ENCODE measurements at regions of chr3 and their contacts with region 1.

Region 1: DNA sequence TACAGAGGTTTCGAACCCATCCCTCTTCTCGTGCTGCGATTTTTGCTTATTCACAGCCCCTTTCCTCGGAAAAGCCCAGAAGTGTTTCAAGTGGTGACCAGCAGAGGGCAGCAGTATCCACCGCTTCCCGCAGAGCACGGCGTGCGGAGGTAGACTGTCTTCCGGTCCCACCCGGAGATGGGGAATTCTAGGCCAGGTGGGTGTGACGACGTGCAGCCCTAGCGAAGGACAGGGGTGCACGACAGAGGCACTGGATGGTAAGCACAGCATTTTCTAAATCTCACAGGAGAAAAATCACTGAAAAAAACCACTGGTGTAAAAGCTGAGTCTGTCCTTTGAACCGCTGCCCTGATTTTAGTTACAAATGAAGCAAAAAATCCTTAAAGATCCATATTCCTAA is 7.4 kb upstream of the PSMD6 start:
- DNase-seq: no peak
- H3K4me3 ChIP-seq: no peak overlapping the region
- CTCF ChIP-seq: peak; percentile 83

Region 2: DNA sequence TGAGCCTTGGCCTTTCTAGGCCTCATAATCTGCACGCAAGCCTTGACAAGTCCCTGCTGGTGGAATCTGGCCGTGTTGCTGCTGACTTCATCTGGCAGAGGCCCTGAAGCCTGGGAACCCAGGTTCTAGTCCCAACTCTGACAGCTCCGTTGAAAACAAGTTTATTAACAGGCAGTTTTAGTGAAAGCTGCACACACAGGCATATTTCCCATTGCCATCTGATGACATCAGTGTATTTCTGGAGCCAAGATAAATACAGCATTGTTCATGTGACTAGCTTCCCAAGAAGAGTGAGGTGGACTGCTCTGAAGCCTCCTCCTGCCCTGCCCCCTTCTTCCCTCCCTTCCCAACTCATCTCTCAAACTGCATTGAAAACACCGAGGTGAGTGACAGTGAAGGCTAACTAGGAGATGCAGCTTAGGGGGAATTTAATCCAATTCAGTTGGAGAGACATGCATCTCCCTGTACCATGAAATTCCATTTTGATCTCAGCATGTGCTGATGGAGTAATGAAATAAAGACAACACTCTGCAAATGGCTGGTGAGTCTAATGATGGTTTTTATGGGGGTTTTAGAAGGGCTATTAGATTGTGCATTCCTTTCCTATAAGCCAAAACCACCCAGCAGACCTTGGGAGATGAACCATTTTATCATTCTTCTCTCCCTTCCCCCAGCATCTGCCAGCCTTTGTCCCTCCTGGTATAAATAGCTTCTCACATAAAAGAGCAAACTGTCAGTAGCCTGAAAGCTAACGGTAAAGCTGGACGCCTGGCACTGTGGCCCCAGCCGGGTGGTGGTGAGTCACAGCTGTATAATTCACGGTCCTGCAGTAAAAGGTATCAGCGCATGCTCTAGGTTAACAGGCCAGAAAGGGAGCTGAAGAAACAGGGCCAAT is 156.6 kb after region 1 on chr3:
- in situ Hi-C with region 1: loop called (anchors 10 kb)
- DNase-seq: peak; percentile 95
- H3K4me3 ChIP-seq: no peak overlapping the region
- CTCF ChIP-seq: peak; percentile 2

Region 3: DNA sequence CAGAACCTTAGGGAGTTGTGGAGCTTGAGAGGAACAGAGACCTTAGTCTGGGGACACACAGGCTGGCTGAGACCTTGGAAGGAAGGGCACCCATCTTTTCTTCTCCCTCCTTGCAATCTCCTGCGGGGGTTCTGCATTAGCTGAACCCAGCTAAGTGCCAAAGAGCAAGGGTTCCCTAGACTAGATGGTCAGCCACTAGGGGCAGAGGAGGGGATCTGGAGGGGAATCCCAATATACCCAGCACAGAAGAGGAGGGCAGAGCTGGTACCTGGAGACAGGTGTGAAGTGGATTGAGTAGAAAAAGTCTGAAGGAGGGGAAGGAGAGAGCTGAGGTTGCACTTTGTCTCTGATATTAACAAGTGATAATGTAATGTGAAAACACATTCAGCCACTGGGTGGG is 444.3 kb after region 1 on chr3:
- in situ Hi-C with region 1: loop called (anchors 10 kb)
- DNase-seq: no peak
- H3K4me3 ChIP-seq: no peak overlapping the region
- CTCF ChIP-seq: peak; percentile 27